ENCODE measurements at regions of chr2 and their contacts with region 1.

Region 1: DNA sequence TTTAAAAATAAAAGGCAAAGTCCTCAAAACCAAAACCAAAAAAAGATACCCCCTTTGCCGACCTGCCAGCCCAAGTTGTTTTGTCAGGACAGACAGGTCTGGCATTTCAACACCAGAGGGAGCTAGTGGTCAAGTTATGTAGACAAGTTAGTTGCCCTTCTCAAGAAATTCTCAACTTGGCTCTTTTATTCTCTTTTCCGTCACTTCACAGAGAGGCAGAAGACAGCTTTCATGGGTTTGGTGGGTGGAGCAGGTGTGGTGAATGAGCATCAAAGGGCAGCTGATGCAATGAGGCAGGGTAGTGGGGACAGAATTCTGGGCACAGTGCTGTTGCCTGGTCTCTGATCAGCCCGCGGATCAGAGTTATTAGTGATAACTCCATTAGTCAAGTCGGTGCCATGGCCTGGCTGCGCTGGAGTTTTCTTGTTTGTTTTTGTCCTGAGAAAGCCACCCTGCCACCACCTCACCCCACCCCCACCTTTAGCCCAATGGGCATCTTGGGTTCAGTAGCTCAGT is 303.7 kb upstream of the EPAS1 start:
- DNase-seq: peak; percentile 70
- H3K4me3 ChIP-seq: no peak overlapping the region; a peak in 1 of 4 replicates
- H3K27ac ChIP-seq: no peak overlapping the region
- H3K4me1 ChIP-seq: peaks cover 0 to 5% of the 10 kb centered on the region in 2 experiments; a peak in 1 of 4 replicates
- H3K27me3 ChIP-seq: no peaks in the 10 kb centered on the region
- CTCF ChIP-seq: peak; percentile 94
- EP300 ChIP-seq: no peak
- RAD21 ChIP-seq: peak; percentile 93

Region 2: DNA sequence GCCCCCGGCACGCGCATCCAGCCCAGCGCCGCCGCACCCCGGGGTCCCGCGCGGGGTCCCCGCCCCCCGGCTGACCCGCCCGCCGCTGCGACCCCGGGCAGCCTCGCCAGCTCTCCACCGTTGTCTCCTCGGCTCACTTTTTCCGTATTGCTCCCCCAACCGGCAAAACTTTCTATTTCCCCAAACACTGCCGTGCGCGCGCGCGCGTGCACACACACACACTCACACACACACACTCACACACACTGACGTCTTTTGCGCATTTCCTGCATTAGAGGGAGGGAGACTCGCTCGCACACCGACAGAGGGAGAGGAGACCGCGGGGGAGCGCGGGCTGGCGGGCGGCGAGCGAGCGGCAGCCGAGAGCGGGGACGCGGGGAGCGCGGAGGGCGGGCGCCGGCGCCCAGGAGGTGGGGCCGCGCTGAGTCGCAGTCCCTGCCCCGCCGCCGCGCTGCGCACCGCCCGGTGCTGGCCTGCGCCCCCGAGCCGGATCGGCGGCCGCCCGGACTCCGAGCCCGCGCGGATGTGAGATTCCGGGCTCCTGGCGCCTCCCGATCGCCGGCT is 342.6 kb before region 1 on chr2:
- CTCF ChIA-PET with region 1: interaction called, 10 read pairs
- POLR2A ChIA-PET with region 1: no interaction called
- DNase-seq: peak; percentile 96
- H3K4me3 ChIP-seq: peak overlapping the region; percentile 87 to 88
- H3K27ac ChIP-seq: peak overlapping the region; percentile 81 to 88
- H3K4me1 ChIP-seq: peaks cover 0 to 30% of the 10 kb centered on the region in 2 experiments; a peak in 2 of 4 replicates
- H3K27me3 ChIP-seq: no peaks in the 10 kb centered on the region
- CTCF ChIP-seq: peak; percentile 55
- EP300 ChIP-seq: peak; percentile 39 to 51; a peak in 3 of 4 replicates
- RAD21 ChIP-seq: peak; percentile 57

Region 3: DNA sequence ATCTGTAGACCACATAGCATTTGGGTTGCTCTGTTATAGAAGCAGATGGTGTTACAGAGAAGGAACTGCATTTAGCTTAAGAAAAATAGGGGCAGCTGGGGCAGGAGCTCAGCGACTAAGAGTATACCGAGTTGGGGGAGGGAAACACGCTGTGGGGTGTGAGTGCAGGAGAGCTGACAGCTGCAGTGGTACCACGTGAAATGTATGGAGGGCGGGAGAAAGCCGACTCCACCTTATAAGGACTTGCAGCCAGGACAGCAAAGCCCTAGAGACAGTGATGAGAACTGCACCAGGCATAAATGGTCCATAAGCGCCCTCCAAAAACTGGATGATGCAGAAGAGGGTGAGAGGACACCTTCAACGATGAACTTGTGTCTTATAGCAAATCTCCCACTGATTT is 104.5 kb before region 1 on chr2:
- CTCF ChIA-PET with region 1: no interaction called
- POLR2A ChIA-PET with region 1: no interaction called
- DNase-seq: no peak
- H3K4me3 ChIP-seq: no peak overlapping the region
- H3K27ac ChIP-seq: no peak overlapping the region
- H3K4me1 ChIP-seq: peaks cover 9 to 44% of the 10 kb centered on the region in 2 experiments; a peak in 2 of 4 replicates
- H3K27me3 ChIP-seq: no peaks in the 10 kb centered on the region
- CTCF ChIP-seq: no peak; the same call in 1 of the 2 replicates
- EP300 ChIP-seq: no peak
- RAD21 ChIP-seq: no peak

Region 4: GRCh38 chr2:45965871-45966498 is 27.5 kb before region 1 on chr2:
- CTCF ChIA-PET with region 1: interaction called, 16 read pairs
- POLR2A ChIA-PET with region 1: no interaction called
- DNase-seq: no peak
- H3K4me3 ChIP-seq: no peak overlapping the region
- H3K27ac ChIP-seq: no peak overlapping the region; a peak in 1 of 4 replicates
- H3K4me1 ChIP-seq: peaks cover 31 to 44% of the 10 kb centered on the region in 2 experiments
- H3K27me3 ChIP-seq: no peaks in the 10 kb centered on the region
- CTCF ChIP-seq: no peak
- EP300 ChIP-seq: no peak
- RAD21 ChIP-seq: no peak

Region 5: GRCh38 chr2:46018773-46019591 is 25.4 kb after region 1 on chr2:
- CTCF ChIA-PET with region 1: interaction called, 10 read pairs
- POLR2A ChIA-PET with region 1: no interaction called
- DNase-seq: no peak
- H3K4me3 ChIP-seq: no peak overlapping the region
- H3K27ac ChIP-seq: no peak overlapping the region
- H3K4me1 ChIP-seq: peaks cover 8 to 15% of the 10 kb centered on the region in 2 experiments; a peak in 2 of 4 replicates
- H3K27me3 ChIP-seq: no peaks in the 10 kb centered on the region
- CTCF ChIP-seq: no peak
- EP300 ChIP-seq: no peak
- RAD21 ChIP-seq: no peak

Region 6: GRCh38 chr2:46377176-46377581 is 383.6 kb after region 1 on chr2:
- CTCF ChIA-PET with region 1: interaction called, 14 read pairs
- POLR2A ChIA-PET with region 1: no interaction called
- DNase-seq: peak; percentile 47
- H3K4me3 ChIP-seq: no peak overlapping the region
- H3K27ac ChIP-seq: peak overlapping the region in 1 of 2 experiments; percentile 98; a peak in 1 of 4 replicates
- H3K4me1 ChIP-seq: peaks cover 0 to 54% of the 10 kb centered on the region in 2 experiments; a peak in 2 of 4 replicates
- H3K27me3 ChIP-seq: no peaks in the 10 kb centered on the region
- CTCF ChIP-seq: peak; percentile 13; the same call in 1 of the 2 replicates
- EP300 ChIP-seq: no peak
- RAD21 ChIP-seq: peak; percentile 43

Region 7: DNA sequence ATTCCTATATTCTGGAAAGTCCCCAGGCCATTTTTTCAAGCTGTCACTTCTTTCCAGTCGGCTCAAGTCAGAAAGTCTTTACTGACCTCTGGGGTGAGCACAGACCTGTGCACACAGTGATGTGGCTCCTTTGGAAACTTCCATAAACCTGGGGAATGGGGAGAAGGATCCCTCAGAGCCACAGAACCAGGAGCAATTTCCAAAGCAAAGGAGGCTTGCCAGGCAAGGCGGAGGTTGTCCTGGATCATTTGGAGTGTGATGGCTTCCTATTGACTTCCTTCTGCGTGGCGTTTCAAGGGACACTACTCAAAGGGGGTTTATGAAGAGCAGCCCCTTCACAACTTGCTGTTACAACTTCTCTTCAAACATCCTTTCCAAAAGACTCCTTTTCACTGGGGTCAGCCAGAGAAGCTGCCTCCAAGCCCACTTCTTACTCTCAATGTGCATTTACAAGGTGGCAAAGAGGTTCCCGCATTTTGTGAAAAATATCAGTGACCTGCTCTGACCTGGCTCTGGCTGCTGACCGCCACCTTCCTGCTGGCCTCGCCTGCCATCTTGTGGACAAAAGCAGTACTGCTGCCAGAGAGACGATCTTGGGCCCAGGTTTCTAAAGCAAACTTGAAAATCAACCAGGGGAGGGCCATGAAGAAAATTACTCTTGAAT is 467.6 kb after region 1 on chr2:
- CTCF ChIA-PET with region 1: interaction called, 11 read pairs
- POLR2A ChIA-PET with region 1: no interaction called
- DNase-seq: peak; percentile 79
- H3K4me3 ChIP-seq: no peak overlapping the region; a peak in 1 of 4 replicates
- H3K27ac ChIP-seq: peak overlapping the region in 1 of 2 experiments; percentile 72; a peak in 1 of 4 replicates
- H3K4me1 ChIP-seq: peaks cover 0 to 21% of the 10 kb centered on the region in 2 experiments; a peak in 1 of 4 replicates
- H3K27me3 ChIP-seq: no peaks in the 10 kb centered on the region
- CTCF ChIP-seq: peak; percentile 100
- EP300 ChIP-seq: no peak
- RAD21 ChIP-seq: peak; percentile 100

Measured in SK-N-SH (cell line).